ENCODE measurements at regions of chr18 and their contacts with region 1.

Region 1: GRCh38 chr18:44725300-44726096 is 44.8 kb downstream of the SETBP1 start:
- DNase-seq: peak in 2 of 9 donors; percentile 11 to 69
- ATAC-seq: peak; percentile 79
- H3K4me3 ChIP-seq: peak overlapping the region; percentile 15
- H3K4me3 Mint-ChIP-seq: peak overlapping the region; percentile 19 to 68 (median 43)
- H3K27ac ChIP-seq: no peak overlapping the region
- H3K27ac Mint-ChIP-seq: peak overlapping the region; percentile 3 to 86 (median 72)
- H3K4me1 ChIP-seq: peaks cover 0 to 67% of the 10 kb centered on the region in 2 donors
- H3K4me1 Mint-ChIP-seq: peaks cover 30 to 89% (median 49%) of the 10 kb centered on the region in 7 donors
- H3K27me3 ChIP-seq: no peaks in the 10 kb centered on the region
- H3K27me3 Mint-ChIP-seq: peaks cover 0 to 16% (median 0%) of the 10 kb centered on the region in 5 donors

Region 2: DNA sequence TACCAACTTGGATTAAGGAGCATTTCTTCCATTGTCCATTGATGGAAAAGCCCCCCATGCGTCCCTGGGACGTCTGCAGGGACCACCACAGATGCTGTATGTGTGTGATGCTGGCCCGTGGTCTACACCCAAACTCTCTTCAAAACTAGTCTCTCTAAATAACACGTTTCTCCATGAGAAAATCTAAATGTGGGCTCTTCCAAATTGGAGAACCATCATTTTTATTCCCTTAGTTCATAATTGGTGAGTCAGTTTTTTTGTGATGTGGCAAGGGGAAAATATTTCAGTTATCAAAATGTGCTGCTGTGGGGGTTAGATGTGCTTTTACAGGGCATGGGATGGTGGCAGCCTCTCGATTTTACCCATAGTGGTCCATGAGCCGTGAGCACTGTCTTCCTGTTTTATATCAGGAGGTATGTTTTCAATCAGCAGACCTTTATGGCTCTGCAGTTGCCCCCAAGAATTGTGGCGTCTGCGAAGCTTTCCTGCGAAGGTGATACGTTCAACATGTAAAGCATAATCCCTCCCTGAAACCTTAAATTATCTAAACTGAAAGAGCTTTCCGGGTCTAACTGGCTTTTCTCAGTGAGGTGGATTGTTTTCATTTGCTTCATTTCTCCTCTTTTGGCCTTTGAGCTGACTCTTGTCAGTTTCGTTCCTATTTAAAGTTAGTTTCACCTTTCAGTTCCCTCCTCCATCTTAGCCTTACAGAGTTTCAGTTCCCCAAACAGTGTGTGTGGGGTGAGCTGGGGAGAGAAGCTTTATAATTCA is 33.5 kb after region 1 on chr18:
- CTCF ChIA-PET with region 1: no interaction called
- POLR2A ChIA-PET with region 1: no interaction called
- intact Hi-C with region 1: loop called in 1 of 2 experiments (anchors 1 kb)
- DNase-seq: peak in 3 of 9 donors; percentile 1 to 41 (median 9)
- ATAC-seq: peak; percentile 86
- H3K4me3 ChIP-seq: peak overlapping the region; percentile 15
- H3K4me3 Mint-ChIP-seq: peak overlapping the region in 9 of 10 donors; percentile 42 to 74 (median 68)
- H3K27ac ChIP-seq: no peak overlapping the region
- H3K27ac Mint-ChIP-seq: peak overlapping the region; percentile 32 to 92 (median 74)
- H3K4me1 ChIP-seq: peaks cover 0 to 16% of the 10 kb centered on the region in 2 donors
- H3K4me1 Mint-ChIP-seq: peaks cover 15 to 31% (median 21%) of the 10 kb centered on the region in 7 donors
- H3K27me3 ChIP-seq: no peaks in the 10 kb centered on the region
- H3K27me3 Mint-ChIP-seq: peaks cover 0 to 17% (median 0%) of the 10 kb centered on the region in 5 donors

Region 3: GRCh38 chr18:44799907-44800421 is 74.5 kb after region 1 on chr18:
- CTCF ChIA-PET with region 1: no interaction called
- POLR2A ChIA-PET with region 1: no interaction called
- intact Hi-C with region 1: loop called in 1 of 2 experiments (anchors 2 kb)
- DNase-seq: no peak
- ATAC-seq: no peak
- H3K4me3 ChIP-seq: no peak overlapping the region
- H3K4me3 Mint-ChIP-seq: peak overlapping the region in 1 of 10 donors; percentile 34
- H3K27ac ChIP-seq: no peak overlapping the region
- H3K27ac Mint-ChIP-seq: peak overlapping the region in 1 of 9 donors; percentile 61
- H3K4me1 ChIP-seq: peaks cover 0 to 9% of the 10 kb centered on the region in 2 donors
- H3K4me1 Mint-ChIP-seq: peaks cover 0 to 40% (median 0%) of the 10 kb centered on the region in 7 donors
- H3K27me3 ChIP-seq: no peaks in the 10 kb centered on the region
- H3K27me3 Mint-ChIP-seq: peaks cover 0 to 3% (median 0%) of the 10 kb centered on the region in 5 donors

Region 4: DNA sequence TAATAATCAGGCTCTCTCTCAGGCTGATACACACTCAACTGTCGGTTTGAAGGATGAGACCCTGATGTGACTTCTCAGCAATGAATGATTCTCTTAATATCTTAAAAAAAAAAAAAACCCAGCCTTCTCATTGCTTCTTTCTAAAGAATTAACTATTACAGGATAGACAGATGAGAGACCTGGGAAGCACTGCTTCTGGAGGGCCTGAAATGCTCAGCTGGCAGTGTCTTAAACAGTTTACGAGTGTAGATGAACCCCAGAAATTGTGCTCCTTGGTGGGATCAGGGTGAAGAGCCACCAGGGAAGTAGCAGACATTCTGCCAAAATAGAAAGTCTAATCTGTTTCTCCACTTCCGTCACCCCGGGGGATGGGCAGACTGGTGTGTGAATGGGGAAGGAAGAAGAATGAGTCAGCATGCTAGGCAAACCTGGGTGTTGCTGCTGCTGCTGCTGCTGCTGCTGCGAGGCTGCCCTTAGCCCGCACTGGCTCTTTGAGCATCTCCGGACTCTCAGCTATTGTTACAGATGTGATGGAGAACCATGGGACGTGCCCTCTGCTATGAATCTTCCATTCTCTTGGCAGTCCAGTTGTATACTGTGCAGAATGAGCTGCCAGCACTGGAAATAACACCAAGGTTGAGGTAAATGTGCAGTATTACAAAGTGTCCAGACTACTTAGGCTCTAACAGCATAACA is 113.6 kb after region 1 on chr18:
- CTCF ChIA-PET with region 1: no interaction called
- POLR2A ChIA-PET with region 1: no interaction called
- intact Hi-C with region 1: loop called in 1 of 2 experiments (anchors 1 kb)
- DNase-seq: peak in 4 of 9 donors; percentile 2 to 66 (median 20)
- ATAC-seq: peak; percentile 90
- H3K4me3 ChIP-seq: no peak overlapping the region
- H3K4me3 Mint-ChIP-seq: peak overlapping the region in 1 of 10 donors; percentile 60
- H3K27ac ChIP-seq: no peak overlapping the region
- H3K27ac Mint-ChIP-seq: peak overlapping the region in 3 of 9 donors; percentile 2 to 30 (median 14)
- H3K4me1 ChIP-seq: peaks cover 6 to 18% of the 10 kb centered on the region in 2 donors
- H3K4me1 Mint-ChIP-seq: peaks cover 0 to 35% (median 11%) of the 10 kb centered on the region in 7 donors
- H3K27me3 ChIP-seq: no peaks in the 10 kb centered on the region
- H3K27me3 Mint-ChIP-seq: peaks cover 0 to 15% (median 4%) of the 10 kb centered on the region in 5 donors

Region 5: DNA sequence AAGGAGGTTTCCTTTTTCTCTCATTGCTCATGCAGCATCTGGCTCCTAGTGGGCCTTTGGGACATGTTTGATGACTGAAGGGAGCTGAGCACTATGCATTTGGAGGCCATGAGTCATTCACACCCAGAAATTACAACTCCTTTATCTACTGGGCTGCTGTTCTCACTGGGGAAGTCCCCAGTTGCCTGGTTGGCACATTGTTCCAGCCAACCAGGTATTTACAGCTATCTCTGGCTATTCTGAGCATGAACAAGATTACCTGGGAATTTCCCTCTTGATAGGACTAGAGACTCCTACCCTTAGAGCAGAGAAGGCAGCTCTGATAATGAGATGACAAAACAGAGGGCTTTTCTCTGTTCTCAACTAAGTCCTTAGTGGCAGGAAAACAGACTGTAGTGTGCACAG is 161.7 kb after region 1 on chr18:
- CTCF ChIA-PET with region 1: no interaction called
- POLR2A ChIA-PET with region 1: no interaction called
- intact Hi-C with region 1: loop called in 1 of 2 experiments (anchors 2 kb)
- DNase-seq: peak in 1 of 9 donors; percentile 54
- ATAC-seq: peak; percentile 79
- H3K4me3 ChIP-seq: no peak overlapping the region
- H3K4me3 Mint-ChIP-seq: no peak overlapping the region
- H3K27ac ChIP-seq: no peak overlapping the region
- H3K27ac Mint-ChIP-seq: peak overlapping the region in 1 of 9 donors; percentile 79
- H3K4me1 ChIP-seq: no peaks in the 10 kb centered on the region
- H3K4me1 Mint-ChIP-seq: peaks cover 0 to 12% (median 0%) of the 10 kb centered on the region in 7 donors
- H3K27me3 ChIP-seq: no peaks in the 10 kb centered on the region
- H3K27me3 Mint-ChIP-seq: peaks cover 0 to 4% (median 0%) of the 10 kb centered on the region in 5 donors

Region 6: GRCh38 chr18:44895176-44895798 is 169.8 kb after region 1 on chr18:
- CTCF ChIA-PET with region 1: no interaction called
- POLR2A ChIA-PET with region 1: no interaction called
- intact Hi-C with region 1: loop called in 1 of 2 experiments (anchors 2 kb)
- DNase-seq: no peak
- ATAC-seq: no peak
- H3K4me3 ChIP-seq: no peak overlapping the region
- H3K4me3 Mint-ChIP-seq: no peak overlapping the region
- H3K27ac ChIP-seq: no peak overlapping the region
- H3K27ac Mint-ChIP-seq: no peak overlapping the region
- H3K4me1 ChIP-seq: no peaks in the 10 kb centered on the region
- H3K4me1 Mint-ChIP-seq: peaks cover 0 to 24% (median 6%) of the 10 kb centered on the region in 7 donors
- H3K27me3 ChIP-seq: no peaks in the 10 kb centered on the region
- H3K27me3 Mint-ChIP-seq: peaks cover 0 to 18% (median 0%) of the 10 kb centered on the region in 5 donors

Measured in naive thymus-derived CD4-positive, alpha-beta T cell (primary cell).